AG04450 (cell line): ENCODE measurements at regions of chr9 and their contacts with region 1.

Region 1: DNA sequence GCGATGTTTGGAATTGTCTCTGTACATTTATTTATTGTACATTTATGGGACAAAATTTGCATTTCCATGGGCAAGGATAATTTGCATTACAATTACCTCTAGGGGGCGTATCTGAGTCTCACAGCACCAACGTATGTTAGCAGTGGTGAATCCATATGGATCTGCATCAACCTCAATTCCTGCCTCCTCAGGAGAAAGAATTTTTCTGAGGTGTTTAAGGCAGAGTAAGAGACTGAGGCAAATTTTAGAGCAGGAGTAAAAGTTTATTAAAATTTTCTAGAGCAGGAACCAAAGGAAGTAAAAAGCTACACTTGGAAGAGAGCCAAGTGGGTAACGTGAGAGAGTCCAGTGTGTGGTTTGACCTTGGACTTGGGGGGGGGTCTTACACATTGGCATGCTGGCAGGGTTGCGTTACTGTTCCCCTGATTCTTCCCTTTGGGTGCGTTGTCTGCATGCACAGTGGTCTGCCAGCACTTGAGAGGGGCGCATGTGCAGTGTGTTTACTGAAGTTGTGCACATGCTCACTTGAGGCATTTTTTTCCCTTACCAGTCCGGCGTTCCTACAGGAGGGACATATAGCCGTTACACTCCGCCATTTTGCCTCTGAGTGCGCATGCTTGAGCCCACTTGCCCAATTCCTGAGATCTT is 21.0 kb upstream of the RAB14 start:
- DNase-seq: no peak
- H3K4me3 ChIP-seq: no peak overlapping the region
- H3K27ac ChIP-seq: no peak overlapping the region
- H3K27me3 ChIP-seq: no peaks in the 10 kb centered on the region
- CTCF ChIP-seq: peak; percentile 76

Region 2: GRCh38 chr9:121233906-121234901 is 11.6 kb after region 1 on chr9:
- CTCF ChIA-PET with region 1: interaction called, 13 read pairs
- POLR2A ChIA-PET with region 1: interaction called, 4 read pairs
- DNase-seq: no peak
- H3K4me3 ChIP-seq: no peak overlapping the region
- H3K27ac ChIP-seq: peak overlapping the region; percentile 85
- H3K27me3 ChIP-seq: no peaks in the 10 kb centered on the region
- CTCF ChIP-seq: no peak

Region 3: DNA sequence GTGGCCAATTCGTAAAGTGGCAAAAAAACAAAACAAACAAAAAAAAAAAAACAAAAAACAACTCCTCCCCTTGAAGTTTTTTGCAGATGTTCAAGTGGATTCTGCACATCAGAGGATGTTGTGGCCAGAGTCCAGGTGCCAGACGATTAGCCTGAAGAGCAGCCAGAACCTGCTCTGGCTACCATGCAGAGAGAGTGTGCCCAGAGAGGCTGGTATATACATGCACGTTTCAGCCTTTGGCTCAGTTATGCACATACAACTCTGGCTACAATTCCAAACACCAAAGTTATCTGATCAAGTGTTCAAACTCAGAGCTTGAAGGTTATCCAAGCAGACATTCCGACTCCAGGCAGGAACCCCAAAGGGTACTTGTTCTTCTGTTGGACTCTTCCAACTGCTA is 242.3 kb after region 1 on chr9:
- CTCF ChIA-PET with region 1: no interaction called
- POLR2A ChIA-PET with region 1: interaction called, 10 read pairs
- DNase-seq: no peak
- H3K4me3 ChIP-seq: no peak overlapping the region
- H3K27ac ChIP-seq: no peak overlapping the region
- H3K27me3 ChIP-seq: peaks cover 49% of the 10 kb centered on the region
- CTCF ChIP-seq: no peak